H1 (cell line): ENCODE measurements at regions of chr10 and their contacts with region 1.

Region 1: DNA sequence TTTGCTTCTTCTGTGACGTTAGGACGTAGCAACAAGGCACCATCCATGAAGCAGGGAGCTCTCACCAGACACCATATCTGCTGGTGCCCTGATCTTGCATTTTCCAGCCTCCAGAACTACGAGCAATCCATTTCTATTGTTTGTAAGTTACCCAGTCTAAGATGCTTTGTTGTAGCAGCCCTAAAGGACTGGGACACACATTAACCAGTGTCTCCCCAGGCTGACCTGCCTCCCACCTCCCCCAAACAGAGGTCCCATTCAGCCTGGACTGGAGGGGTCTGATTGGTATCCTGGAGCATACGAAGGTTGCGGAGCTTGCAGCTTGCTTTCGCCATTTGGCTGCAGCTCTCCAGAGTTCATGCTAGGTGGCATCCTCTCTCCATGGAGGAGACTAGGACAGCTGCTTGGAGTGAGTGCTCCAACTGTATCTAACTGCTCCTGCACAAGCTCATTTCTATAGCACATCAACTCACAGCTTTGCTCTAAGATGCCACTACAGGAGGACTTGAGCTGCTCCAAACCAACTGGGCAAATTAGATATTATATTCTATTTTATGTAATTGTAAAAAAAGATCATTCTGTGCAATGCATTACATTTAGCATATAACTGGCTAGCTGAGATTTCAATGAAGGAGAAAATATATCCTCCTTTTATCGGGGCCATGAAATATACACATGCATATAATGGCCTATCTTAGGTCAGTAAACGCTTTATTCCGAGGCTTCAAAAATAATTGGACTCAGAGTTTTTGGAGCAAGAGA is 8.0 kb upstream of the GRK5 start:
- DNase-seq: peak in 1 of 2 experiments; percentile 59
- H3K4me3 ChIP-seq: no peak overlapping the region
- H3K27ac ChIP-seq: no peak overlapping the region
- H3K4me1 ChIP-seq: peaks cover 0 to 3% (median 0%) of the 10 kb centered on the region in 4 experiments; a peak in 1 of 7 replicates
- H3K27me3 ChIP-seq: no peaks in the 10 kb centered on the region
- CTCF ChIP-seq: peak; percentile 75 to 91 (median 87)
- EP300 ChIP-seq: no peak
- POLR2A ChIP-seq: no peak
- RAD21 ChIP-seq: peak; percentile 94 to 95

Region 2: DNA sequence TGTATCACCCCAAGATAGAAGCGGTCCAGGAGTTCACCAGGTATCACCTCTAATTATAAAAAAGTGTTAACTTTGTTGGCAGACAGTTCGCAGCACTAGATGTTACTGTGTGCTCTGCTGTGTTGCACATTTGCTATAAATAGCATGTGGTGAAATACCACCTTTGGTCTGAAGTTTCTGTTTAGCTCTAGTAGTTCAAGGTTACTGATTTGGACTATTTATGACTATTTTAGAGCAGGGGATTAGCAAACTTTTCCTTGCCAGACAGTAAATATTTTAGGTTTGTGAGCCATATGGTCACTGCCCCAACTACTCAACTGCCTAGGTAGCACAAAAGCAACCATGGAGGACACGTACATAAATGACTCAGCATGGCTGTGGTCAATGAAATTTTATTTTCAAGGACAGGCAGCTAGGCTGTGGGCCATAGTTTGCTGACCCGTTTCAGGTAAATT is 79.0 kb before region 1 on chr10:
- CTCF ChIA-PET with region 1: no interaction called
- POLR2A ChIA-PET with region 1: no interaction called
- DNase-seq: no peak
- H3K4me3 ChIP-seq: no peak overlapping the region
- H3K27ac ChIP-seq: no peak overlapping the region
- H3K4me1 ChIP-seq: no peaks in the 10 kb centered on the region
- H3K27me3 ChIP-seq: no peaks in the 10 kb centered on the region
- CTCF ChIP-seq: no peak
- EP300 ChIP-seq: no peak
- POLR2A ChIP-seq: no peak
- RAD21 ChIP-seq: no peak

Region 3: DNA sequence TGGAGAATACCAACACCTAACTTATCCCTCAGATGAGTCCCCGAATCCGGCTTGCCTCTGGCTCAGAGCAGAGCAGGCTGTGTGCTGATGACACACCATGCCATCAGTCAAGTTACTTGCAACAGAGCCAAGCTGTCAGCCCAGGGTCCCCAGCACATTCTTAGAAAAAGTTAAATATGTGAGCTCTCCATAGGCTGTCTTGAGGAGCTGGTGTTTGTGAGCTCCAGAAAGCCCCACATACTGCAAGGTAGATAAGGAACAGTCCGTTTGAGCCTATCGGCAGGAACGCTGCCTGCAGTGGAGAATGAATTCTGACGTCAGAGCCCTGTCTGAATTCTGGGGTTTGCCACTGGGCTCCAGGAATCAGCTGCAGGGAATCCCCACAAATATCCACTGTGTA is 37.7 kb before region 1 on chr10:
- CTCF ChIA-PET with region 1: interaction called, 15 read pairs
- POLR2A ChIA-PET with region 1: interaction called, 3 read pairs
- DNase-seq: no peak
- H3K4me3 ChIP-seq: no peak overlapping the region
- H3K27ac ChIP-seq: no peak overlapping the region
- H3K4me1 ChIP-seq: peaks cover 0 to 5% (median 0%) of the 10 kb centered on the region in 4 experiments; a peak in 2 of 7 replicates
- H3K27me3 ChIP-seq: no peaks in the 10 kb centered on the region; a peak in 2 of 7 replicates
- CTCF ChIP-seq: no peak
- EP300 ChIP-seq: no peak
- POLR2A ChIP-seq: no peak
- RAD21 ChIP-seq: no peak

Region 4: DNA sequence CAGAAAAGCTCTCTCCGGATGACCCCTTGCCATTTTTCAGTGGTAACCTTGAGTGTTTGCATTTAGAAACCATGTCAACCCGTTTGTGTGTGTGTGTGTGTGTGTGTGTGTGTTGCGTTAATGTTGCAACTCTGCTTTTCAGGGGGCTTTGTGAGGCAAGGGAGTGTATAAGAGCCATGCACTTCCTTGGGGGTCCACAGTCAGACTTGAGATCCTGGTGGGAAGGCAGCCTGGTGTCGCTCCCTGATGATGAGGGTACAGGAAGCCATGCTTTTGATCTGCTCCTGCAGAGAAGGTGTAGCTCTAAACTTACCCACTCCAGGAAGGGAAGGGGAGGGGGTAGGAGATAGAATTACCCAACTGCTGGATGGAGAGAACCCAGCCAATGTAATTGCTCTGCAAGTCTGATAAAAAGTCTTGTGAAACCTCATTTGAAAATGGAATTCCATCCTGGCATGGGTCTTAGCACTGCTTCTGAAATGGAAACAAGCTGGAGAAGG is 18.6 kb after region 1 on chr10:
- CTCF ChIA-PET with region 1: interaction called, 15 read pairs
- POLR2A ChIA-PET with region 1: interaction called, 3 read pairs
- DNase-seq: no peak
- H3K4me3 ChIP-seq: no peak overlapping the region
- H3K27ac ChIP-seq: no peak overlapping the region
- H3K4me1 ChIP-seq: peaks cover 2 to 24% (median 11%) of the 10 kb centered on the region in 4 experiments; a peak in 6 of 7 replicates
- H3K27me3 ChIP-seq: peaks cover 0 to 2% (median 0%) of the 10 kb centered on the region in 4 experiments; a peak in 1 of 7 replicates
- CTCF ChIP-seq: no peak
- EP300 ChIP-seq: no peak
- POLR2A ChIP-seq: no peak
- RAD21 ChIP-seq: no peak

Region 5: DNA sequence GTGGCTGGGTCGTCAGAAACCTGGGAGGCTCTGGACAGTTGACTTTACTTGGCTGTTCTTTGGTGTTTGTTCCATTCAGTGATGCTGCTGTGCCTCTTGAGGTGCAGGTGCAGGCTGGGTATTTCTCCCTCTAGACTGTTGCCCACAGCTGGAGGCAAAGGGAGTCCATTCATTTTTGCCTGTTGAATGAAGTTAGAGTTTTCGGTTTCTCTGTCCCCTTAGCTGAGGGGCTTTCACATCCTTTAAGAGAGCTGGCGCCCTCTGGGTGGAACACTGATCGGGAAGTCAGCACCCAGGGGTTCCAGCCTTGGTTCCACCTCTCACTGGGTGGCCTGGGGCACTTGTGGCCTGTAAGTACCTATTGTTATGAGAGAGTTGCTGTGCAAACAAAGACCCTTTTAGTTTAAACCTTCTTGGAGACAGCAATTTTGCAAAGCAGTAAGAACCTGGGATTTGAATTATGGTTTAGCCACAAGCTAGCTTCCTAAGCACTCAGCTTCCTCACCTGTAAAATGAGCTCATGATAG is 75.2 kb after region 1 on chr10:
- CTCF ChIA-PET with region 1: interaction called, 10 read pairs
- POLR2A ChIA-PET with region 1: no interaction called
- DNase-seq: no peak
- H3K4me3 ChIP-seq: no peak overlapping the region
- H3K27ac ChIP-seq: no peak overlapping the region
- H3K4me1 ChIP-seq: no peaks in the 10 kb centered on the region
- H3K27me3 ChIP-seq: no peaks in the 10 kb centered on the region
- CTCF ChIP-seq: no peak
- EP300 ChIP-seq: no peak
- POLR2A ChIP-seq: no peak
- RAD21 ChIP-seq: no peak

Region 6: GRCh38 chr10:119401671-119402395 is 202.4 kb after region 1 on chr10:
- CTCF ChIA-PET with region 1: interaction called, 10 read pairs
- POLR2A ChIA-PET with region 1: no interaction called
- DNase-seq: no peak
- H3K4me3 ChIP-seq: no peak overlapping the region
- H3K27ac ChIP-seq: no peak overlapping the region
- H3K4me1 ChIP-seq: no peaks in the 10 kb centered on the region; a peak in 1 of 7 replicates
- H3K27me3 ChIP-seq: no peaks in the 10 kb centered on the region; a peak in 1 of 7 replicates
- CTCF ChIP-seq: no peak
- EP300 ChIP-seq: no peak
- POLR2A ChIP-seq: no peak
- RAD21 ChIP-seq: no peak

Region 7: GRCh38 chr10:119445311-119445934 is 246.0 kb after region 1 on chr10:
- CTCF ChIA-PET with region 1: interaction called, 57 read pairs
- POLR2A ChIA-PET with region 1: no interaction called
- DNase-seq: peak; percentile 56 to 95
- H3K4me3 ChIP-seq: no peak overlapping the region
- H3K27ac ChIP-seq: no peak overlapping the region
- H3K4me1 ChIP-seq: peaks cover 0 to 4% (median 0%) of the 10 kb centered on the region in 4 experiments; a peak in 3 of 7 replicates
- H3K27me3 ChIP-seq: no peaks in the 10 kb centered on the region
- CTCF ChIP-seq: peak; percentile 92 to 97 (median 93)
- EP300 ChIP-seq: no peak
- POLR2A ChIP-seq: no peak
- RAD21 ChIP-seq: peak; percentile 83 to 85

Region 8: GRCh38 chr10:119494236-119495060 is 295.0 kb after region 1 on chr10:
- CTCF ChIA-PET with region 1: interaction called, 16 read pairs
- POLR2A ChIA-PET with region 1: no interaction called
- DNase-seq: no peak
- H3K4me3 ChIP-seq: no peak overlapping the region
- H3K27ac ChIP-seq: no peak overlapping the region
- H3K4me1 ChIP-seq: peaks cover 0 to 4% (median 0%) of the 10 kb centered on the region in 4 experiments; a peak in 3 of 7 replicates
- H3K27me3 ChIP-seq: no peaks in the 10 kb centered on the region; a peak in 2 of 7 replicates
- CTCF ChIP-seq: no peak
- EP300 ChIP-seq: no peak
- POLR2A ChIP-seq: no peak
- RAD21 ChIP-seq: no peak